Activated naive CD4-positive, alpha-beta T cell treated with anti-CD3 and anti-CD28 coated beads for 36 hours (primary cell): ENCODE measurements at regions of chr15 and their contacts with region 1.

Region 1: GRCh38 chr15:69760890-69761568 is 308.4 kb downstream of the RPLP1 start:
- DNase-seq: peak; percentile 93
- H3K4me3 Mint-ChIP-seq: peak overlapping the region; percentile 20
- H3K27ac Mint-ChIP-seq: peak overlapping the region; percentile 97
- H3K4me1 Mint-ChIP-seq: peaks cover 74% of the 10 kb centered on the region
- H3K27me3 Mint-ChIP-seq: peaks cover 2% of the 10 kb centered on the region

Region 2: DNA sequence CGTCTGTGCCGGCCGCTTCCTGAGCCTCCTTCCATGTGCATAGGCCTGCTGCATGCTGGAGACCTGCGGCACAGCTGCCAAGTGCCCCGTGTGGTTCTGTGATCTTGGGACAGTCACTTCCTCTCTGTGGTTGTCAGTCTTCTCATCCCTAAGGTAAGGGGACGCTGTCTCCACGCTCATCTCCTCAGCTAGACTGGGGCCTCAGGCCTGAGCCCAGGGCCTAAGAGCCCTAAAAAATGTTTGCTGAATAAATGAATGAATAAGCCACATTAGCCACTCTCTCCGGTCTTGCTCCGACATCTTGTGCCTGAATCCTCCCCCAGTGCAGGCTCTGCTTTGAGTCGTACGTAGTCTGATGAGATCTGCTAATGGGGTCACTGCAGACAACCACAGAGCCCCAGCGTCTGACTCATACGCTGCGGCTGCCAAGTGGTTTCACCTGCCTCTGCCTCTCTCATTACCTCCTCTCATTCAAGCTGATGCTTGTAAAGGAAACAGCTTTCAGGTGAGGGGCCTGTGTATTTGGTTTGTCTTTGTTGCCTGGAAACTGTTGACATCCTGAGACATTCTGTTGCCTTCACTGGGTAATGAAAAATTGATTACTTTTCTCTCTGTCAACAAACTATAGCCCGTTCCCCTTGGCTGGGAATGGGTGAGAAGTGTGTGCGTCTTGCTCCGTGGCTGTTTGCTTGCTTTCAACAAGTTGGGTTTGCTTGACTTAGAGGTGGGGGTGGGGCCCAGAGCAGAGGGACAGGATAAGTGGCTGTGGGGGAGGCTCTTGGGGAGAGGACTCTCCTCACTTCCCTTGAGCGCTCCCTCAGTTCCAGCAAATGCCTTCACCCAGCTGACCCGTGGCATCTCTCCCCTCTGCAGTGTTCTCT is 292.5 kb before region 1 on chr15:
- CTCF ChIA-PET with region 1: no interaction called
- intact Hi-C with region 1: loop called (anchors 1 kb)
- DNase-seq: peak; percentile 89
- H3K4me3 Mint-ChIP-seq: peak overlapping the region; percentile 25
- H3K27ac Mint-ChIP-seq: peak overlapping the region; percentile 75
- H3K4me1 Mint-ChIP-seq: peaks cover 27% of the 10 kb centered on the region
- H3K27me3 Mint-ChIP-seq: no peaks in the 10 kb centered on the region

Region 3: DNA sequence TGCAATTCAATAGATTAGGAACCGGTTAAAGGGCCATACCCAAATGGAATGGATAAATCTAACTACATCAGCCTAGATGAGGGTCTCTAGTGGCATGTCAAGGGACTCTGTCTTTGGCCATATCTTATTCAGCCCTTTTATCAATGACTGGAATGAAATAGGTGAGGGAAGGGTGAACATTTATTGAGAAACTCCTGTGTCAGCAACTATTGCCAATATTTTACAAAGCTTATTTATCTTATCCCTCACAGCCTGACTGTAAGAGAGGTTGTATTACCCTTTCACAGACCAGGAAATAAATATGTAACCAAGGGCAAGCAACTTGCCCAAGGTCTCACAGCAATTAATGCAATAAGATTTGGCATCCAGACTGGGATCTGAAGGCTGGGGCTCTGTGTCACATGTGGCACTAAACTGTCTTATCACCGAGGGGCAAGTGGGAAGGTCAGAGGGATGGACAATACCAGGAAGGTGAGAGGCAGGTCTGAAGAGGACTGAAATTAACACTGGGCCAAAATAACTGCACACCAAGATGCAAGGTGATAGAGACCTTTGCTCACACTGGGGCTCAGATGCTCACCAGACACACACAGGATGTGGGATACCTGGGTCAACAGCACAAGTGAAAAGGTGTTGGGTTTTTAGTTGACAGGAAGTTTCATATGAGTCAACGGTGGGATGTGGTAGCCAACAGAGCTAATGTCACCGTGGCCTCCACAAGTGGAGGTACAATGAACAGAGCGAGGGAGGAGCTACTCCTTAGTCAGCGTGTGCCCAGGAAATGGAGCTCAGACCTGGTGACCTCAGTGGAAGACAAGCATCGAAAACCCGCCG is 47.1 kb before region 1 on chr15:
- CTCF ChIA-PET with region 1: no interaction called
- intact Hi-C with region 1: loop called (anchors 1 kb)
- DNase-seq: peak; percentile 90
- H3K4me3 Mint-ChIP-seq: no peak overlapping the region
- H3K27ac Mint-ChIP-seq: peak overlapping the region; percentile 73
- H3K4me1 Mint-ChIP-seq: peaks cover 55% of the 10 kb centered on the region
- H3K27me3 Mint-ChIP-seq: no peaks in the 10 kb centered on the region

Region 4: DNA sequence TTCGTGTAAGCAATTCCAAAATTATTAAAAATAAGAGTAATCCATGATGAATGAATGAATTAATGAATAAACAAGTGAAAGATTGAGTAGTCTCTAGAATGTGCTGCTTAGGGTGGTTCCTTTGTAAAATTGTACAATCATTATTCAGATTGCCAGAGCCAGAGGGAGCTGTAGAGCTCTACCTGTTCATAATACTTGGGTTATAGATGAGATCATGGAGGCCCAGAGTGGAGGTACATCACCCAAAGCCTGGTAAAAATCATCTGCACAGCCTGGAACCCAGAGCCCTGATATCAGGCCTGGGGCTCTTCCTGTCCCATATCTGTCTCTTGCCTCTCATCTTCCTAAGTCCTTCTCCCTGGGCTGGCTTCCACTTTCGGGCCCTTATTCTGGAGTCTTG is 11.2 kb before region 1 on chr15:
- CTCF ChIA-PET with region 1: interaction called, 4 read pairs
- intact Hi-C with region 1: loop called (anchors 1 kb)
- DNase-seq: peak; percentile 55
- H3K4me3 Mint-ChIP-seq: no peak overlapping the region
- H3K27ac Mint-ChIP-seq: peak overlapping the region; percentile 47
- H3K4me1 Mint-ChIP-seq: peaks cover 55% of the 10 kb centered on the region
- H3K27me3 Mint-ChIP-seq: peaks cover 10% of the 10 kb centered on the region

Region 5: GRCh38 chr15:70023064-70023768 is 262.2 kb after region 1 on chr15:
- CTCF ChIA-PET with region 1: no interaction called
- intact Hi-C with region 1: loop called (anchors 2 kb)
- DNase-seq: peak; percentile 70
- H3K4me3 Mint-ChIP-seq: no peak overlapping the region
- H3K27ac Mint-ChIP-seq: peak overlapping the region; percentile 42
- H3K4me1 Mint-ChIP-seq: peaks cover 15% of the 10 kb centered on the region
- H3K27me3 Mint-ChIP-seq: no peaks in the 10 kb centered on the region

Region 6: DNA sequence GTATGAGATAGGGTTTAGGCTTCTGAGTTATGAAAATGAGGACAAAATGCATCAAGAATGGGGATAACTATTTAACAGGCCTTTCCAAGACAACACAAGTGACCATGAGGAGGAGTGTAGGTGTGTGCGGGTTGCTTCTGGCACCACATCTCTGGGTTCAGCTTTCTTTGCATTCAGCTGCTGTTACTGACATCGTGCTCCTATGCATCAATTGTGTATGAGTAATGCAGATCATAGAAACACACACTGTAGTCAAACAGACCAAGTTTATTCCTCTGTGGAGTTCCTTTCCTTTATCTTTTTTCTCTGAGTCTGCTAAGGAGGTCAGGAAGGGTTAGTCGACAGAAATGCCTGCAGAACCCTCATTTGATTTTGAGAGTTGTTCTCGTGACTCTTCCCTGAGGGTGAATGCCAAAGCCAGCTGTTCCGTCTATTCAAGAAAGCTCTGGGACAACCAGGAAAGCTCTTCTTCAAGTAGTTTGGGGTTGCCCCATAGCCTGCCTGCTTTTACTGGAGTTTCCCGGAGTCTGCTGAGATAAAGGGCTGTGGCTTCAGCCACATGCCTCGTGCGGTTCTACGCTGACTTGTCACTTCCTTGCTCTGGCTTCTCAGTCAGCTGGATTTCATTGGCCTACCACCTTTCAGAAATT is 473.4 kb after region 1 on chr15:
- CTCF ChIA-PET with region 1: no interaction called
- intact Hi-C with region 1: loop called (anchors 1 kb)
- DNase-seq: peak; percentile 69
- H3K4me3 Mint-ChIP-seq: no peak overlapping the region
- H3K27ac Mint-ChIP-seq: peak overlapping the region; percentile 55
- H3K4me1 Mint-ChIP-seq: peaks cover 26% of the 10 kb centered on the region
- H3K27me3 Mint-ChIP-seq: peaks cover 2% of the 10 kb centered on the region